ENCODE measurements at regions of chr2 and their contacts with region 1.

Region 1: DNA sequence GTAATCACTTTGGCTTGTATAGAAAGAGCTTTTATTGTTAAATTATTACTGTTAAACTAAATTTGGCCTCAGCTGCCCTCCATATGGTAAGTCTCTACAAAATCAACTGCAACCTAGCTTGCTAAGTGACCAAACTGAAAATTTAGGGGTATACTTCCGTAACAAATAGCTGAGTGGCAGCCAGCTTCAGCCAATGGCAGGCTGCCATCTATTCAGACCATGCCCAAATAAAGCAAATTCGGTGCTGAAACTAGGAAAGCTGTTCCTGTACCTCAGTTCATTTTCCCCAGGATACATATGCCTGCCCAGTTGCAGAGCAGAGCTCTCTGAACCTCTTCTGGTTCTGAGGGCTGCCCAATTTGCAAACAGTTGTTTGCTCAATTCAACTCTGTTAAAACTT is 94.8 kb downstream of the EML6 start:
- DNase-seq: no peak
- ATAC-seq: no peak
- H3K4me3 ChIP-seq: no peak overlapping the region
- H3K4me3 Mint-ChIP-seq: no peak overlapping the region
- H3K27ac ChIP-seq: no peak overlapping the region
- H3K27ac Mint-ChIP-seq: no peak overlapping the region
- H3K4me1 ChIP-seq: no peaks in the 10 kb centered on the region
- H3K4me1 Mint-ChIP-seq: no peaks in the 10 kb centered on the region
- H3K27me3 ChIP-seq: no peaks in the 10 kb centered on the region
- H3K27me3 Mint-ChIP-seq: peaks cover 0 to 30% (median 13%) of the 10 kb centered on the region in 5 donors

Region 2: DNA sequence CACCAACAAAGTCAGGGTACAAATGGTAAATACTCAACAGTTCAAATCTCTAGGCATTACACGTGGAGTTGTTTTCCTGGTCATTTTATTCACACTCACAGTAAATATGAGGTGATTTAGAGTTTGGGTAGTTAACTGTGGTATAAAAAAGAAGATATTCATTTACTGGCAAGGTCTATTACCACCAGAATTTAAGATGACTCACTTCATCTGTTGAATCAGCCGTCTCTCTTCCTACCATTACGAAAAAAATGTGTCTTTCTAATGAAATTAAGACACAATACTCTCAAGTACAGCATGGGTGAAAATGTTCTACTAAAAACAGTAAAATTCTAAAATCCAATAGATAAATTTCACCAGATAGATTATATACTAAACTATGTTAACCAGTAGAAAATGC is 937.5 kb before region 1 on chr2:
- CTCF ChIA-PET with region 1: no interaction called
- POLR2A ChIA-PET with region 1: no interaction called
- intact Hi-C with region 1: no loop called
- DNase-seq: no peak
- ATAC-seq: no peak
- H3K4me3 ChIP-seq: no peak overlapping the region
- H3K4me3 Mint-ChIP-seq: no peak overlapping the region
- H3K27ac ChIP-seq: no peak overlapping the region
- H3K27ac Mint-ChIP-seq: no peak overlapping the region
- H3K4me1 ChIP-seq: no peaks in the 10 kb centered on the region
- H3K4me1 Mint-ChIP-seq: peaks cover 0 to 3% (median 0%) of the 10 kb centered on the region in 7 donors
- H3K27me3 ChIP-seq: no peaks in the 10 kb centered on the region
- H3K27me3 Mint-ChIP-seq: no peaks in the 10 kb centered on the region

Region 3: DNA sequence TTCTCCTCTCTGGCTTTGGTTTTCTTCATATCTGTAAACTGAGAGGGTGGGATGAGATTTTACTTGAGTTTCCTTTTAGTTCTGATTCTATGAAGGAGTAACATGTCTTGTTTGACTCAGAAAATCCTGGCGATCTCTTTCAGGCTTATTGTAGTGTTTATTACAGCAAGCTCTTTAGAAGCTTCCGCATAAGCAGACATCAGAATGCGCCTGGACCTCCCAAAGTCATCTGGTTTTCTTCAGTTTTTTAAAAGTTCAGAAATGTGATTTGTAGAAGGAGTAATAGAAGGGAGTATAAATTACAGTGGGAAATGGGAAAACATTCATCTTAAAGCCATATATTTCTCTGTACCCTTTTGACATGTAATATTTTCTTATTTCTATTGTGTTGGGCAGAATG is 26.4 kb before region 1 on chr2:
- CTCF ChIA-PET with region 1: no interaction called
- POLR2A ChIA-PET with region 1: no interaction called
- intact Hi-C with region 1: loop called in 1 of 2 experiments (anchors 1 kb)
- DNase-seq: no peak
- ATAC-seq: no peak
- H3K4me3 ChIP-seq: no peak overlapping the region
- H3K4me3 Mint-ChIP-seq: no peak overlapping the region
- H3K27ac ChIP-seq: no peak overlapping the region
- H3K27ac Mint-ChIP-seq: no peak overlapping the region
- H3K4me1 ChIP-seq: no peaks in the 10 kb centered on the region
- H3K4me1 Mint-ChIP-seq: no peaks in the 10 kb centered on the region
- H3K27me3 ChIP-seq: no peaks in the 10 kb centered on the region
- H3K27me3 Mint-ChIP-seq: peaks cover 0 to 15% (median 8%) of the 10 kb centered on the region in 5 donors

Region 4: GRCh38 chr2:55204950-55205349 is 386.7 kb after region 1 on chr2:
- CTCF ChIA-PET with region 1: no interaction called
- POLR2A ChIA-PET with region 1: no interaction called
- intact Hi-C with region 1: no loop called
- DNase-seq: no peak
- ATAC-seq: no peak
- H3K4me3 ChIP-seq: no peak overlapping the region
- H3K4me3 Mint-ChIP-seq: no peak overlapping the region
- H3K27ac ChIP-seq: no peak overlapping the region
- H3K27ac Mint-ChIP-seq: no peak overlapping the region
- H3K4me1 ChIP-seq: no peaks in the 10 kb centered on the region
- H3K4me1 Mint-ChIP-seq: peaks cover 0 to 1% (median 0%) of the 10 kb centered on the region in 7 donors
- H3K27me3 ChIP-seq: no peaks in the 10 kb centered on the region
- H3K27me3 Mint-ChIP-seq: no peaks in the 10 kb centered on the region

Region 5: GRCh38 chr2:56018224-56018623 is 1200.0 kb after region 1 on chr2:
- CTCF ChIA-PET with region 1: no interaction called
- POLR2A ChIA-PET with region 1: no interaction called
- intact Hi-C with region 1: no loop called
- DNase-seq: no peak
- ATAC-seq: no peak
- H3K4me3 ChIP-seq: no peak overlapping the region
- H3K4me3 Mint-ChIP-seq: no peak overlapping the region
- H3K27ac ChIP-seq: no peak overlapping the region
- H3K27ac Mint-ChIP-seq: no peak overlapping the region
- H3K4me1 ChIP-seq: no peaks in the 10 kb centered on the region
- H3K4me1 Mint-ChIP-seq: no peaks in the 10 kb centered on the region
- H3K27me3 ChIP-seq: no peaks in the 10 kb centered on the region
- H3K27me3 Mint-ChIP-seq: peaks cover 0 to 3% (median 0%) of the 10 kb centered on the region in 5 donors

Measured in naive thymus-derived CD4-positive, alpha-beta T cell (primary cell).